ENCODE measurements at regions of chr3 and their contacts with region 1.

Region 1: DNA sequence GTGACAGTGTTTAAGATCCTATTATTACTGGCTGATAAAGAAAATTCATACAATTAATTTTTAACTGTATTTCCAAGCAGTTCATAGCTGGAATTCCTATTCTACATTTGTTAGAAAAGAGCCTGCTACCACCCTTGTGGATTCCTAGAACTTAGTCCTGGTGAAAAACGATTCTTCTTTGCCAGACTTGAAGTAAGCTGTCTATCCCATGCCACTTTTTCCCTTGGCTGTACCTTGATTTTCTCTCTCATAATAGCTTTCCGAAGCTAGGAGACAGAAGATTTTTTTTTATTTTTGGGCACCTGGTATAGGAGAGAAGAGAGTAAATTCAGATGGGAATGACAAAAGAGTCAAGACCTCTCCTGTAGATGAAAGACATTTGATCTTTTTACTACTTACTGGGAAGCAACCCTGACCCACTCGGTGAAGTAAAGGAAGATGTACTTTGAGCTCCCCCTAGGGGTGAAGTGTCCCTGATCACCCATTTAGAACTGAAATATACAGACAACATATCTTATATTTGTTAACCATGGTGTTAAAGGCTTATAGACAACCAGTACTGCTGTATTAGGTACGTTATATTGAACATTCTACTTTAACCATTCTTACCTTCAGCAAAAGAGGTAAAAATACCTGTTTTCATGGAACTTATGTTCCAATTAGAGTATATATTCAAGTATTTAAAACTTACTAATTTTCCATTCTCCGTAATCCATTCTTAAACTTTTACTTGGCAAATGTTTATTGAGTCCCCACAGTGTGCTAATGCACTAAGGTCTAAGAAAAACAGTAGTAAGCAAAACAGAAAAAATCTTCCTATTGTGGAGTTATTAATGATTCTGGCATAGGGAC is 36.2 kb upstream of the C3orf38 start:
- DNase-seq: peak; percentile 72
- H3K4me3 ChIP-seq: no peak overlapping the region
- H3K27ac ChIP-seq: no peak overlapping the region
- H3K4me1 ChIP-seq: no peaks in the 10 kb centered on the region
- CTCF ChIP-seq: peak; percentile 92

Region 2: DNA sequence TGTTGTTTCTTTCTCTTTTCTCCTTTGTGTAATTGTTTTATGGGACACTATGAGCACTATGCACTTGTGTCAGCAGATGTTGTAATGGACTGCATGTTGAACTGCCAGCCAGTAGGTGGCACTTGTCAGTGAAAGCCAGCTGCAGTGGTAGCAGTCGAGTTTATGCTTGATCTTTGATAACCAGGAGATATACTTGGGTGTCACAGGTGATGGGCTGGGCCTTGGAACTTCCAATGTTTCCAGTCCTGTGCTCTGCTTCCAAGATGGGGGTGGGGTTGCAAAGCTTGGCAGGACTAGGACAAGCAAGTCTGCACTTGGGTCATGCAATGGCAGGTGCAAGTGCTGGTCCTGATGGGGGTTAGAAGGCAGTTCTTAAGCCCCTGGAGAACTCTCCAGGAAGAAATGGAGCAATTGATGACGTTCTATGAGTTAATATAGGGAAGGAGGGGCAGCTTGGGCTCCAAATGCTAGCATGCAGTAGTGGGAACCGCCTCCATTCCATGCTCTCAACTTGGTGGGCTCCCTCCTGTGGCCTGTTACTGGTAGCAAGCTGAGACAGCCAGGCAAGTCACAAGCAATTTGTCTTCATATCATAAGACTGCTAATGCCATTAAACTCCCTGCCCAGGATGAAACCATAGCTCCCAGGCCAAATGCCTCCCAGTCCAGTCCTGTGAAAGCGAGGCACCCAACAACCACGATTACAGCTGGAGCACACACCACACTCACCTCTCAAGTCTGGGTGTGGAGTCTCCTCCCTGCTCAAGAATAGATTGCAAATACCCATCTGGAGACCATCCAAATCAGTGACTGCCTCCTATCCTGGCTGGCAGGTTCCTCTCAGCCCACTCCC is 342.0 kb before region 1 on chr3:
- CTCF ChIA-PET with region 1: no interaction called
- POLR2A ChIA-PET with region 1: no interaction called
- intact Hi-C with region 1: loop called (anchors 5 kb)
- DNase-seq: peak; percentile 51
- H3K4me3 ChIP-seq: no peak overlapping the region
- H3K27ac ChIP-seq: no peak overlapping the region
- H3K4me1 ChIP-seq: no peaks in the 10 kb centered on the region
- CTCF ChIP-seq: peak; percentile 88

Region 3: DNA sequence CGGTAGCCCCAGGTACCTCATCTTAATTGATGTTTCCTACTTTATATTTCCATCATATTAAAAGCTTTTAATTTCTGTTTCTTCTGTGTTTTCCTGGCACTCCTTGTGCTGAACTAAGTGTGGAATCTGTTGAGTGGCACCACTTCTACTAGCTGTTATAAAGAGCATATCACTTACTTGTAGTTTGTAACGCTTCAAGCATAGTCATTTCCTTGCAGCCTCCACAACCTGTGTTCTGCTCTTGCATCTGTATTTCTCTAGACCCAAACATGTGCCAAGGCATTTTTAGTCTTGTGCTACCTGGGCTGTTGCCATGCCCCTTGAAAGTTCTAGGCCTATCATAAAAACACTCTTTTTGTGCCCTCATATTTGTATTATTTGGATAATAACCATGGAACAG is 38.5 kb before region 1 on chr3:
- CTCF ChIA-PET with region 1: no interaction called
- POLR2A ChIA-PET with region 1: no interaction called
- intact Hi-C with region 1: no loop called
- DNase-seq: no peak
- H3K4me3 ChIP-seq: no peak overlapping the region
- H3K27ac ChIP-seq: no peak overlapping the region
- H3K4me1 ChIP-seq: no peaks in the 10 kb centered on the region
- CTCF ChIP-seq: no peak

Measured in OCI-LY7 (cell line).